Activated CD8-positive, alpha-beta memory T cell treated with anti-CD3 and anti-CD28 coated beads, Interleukin-2, amount 10 ng/mL, durations not matched to agents 7 days and 5 days (primary cell): ENCODE measurements at regions of chr4 and their contacts with region 1.

Region 1: GRCh38 chr4:140252742-140253555 is 99.0 kb upstream of the MAML3 start:
- DNase-seq: peak; percentile 57
- ATAC-seq: peak; percentile 84
- H3K4me3 Mint-ChIP-seq: peak overlapping the region; percentile 54
- H3K27ac Mint-ChIP-seq: no peak overlapping the region
- H3K4me1 Mint-ChIP-seq: peaks cover 23% of the 10 kb centered on the region
- H3K27me3 Mint-ChIP-seq: peaks cover 25% of the 10 kb centered on the region

Region 2: GRCh38 chr4:140012688-140013486 is 240.1 kb before region 1 on chr4:
- CTCF ChIA-PET with region 1: interaction called, 33 read pairs
- DNase-seq: peak; percentile 61
- ATAC-seq: peak; percentile 91
- H3K4me3 Mint-ChIP-seq: no peak overlapping the region
- H3K27ac Mint-ChIP-seq: no peak overlapping the region
- H3K4me1 Mint-ChIP-seq: peaks cover 8% of the 10 kb centered on the region
- H3K27me3 Mint-ChIP-seq: peaks cover 28% of the 10 kb centered on the region

Region 3: DNA sequence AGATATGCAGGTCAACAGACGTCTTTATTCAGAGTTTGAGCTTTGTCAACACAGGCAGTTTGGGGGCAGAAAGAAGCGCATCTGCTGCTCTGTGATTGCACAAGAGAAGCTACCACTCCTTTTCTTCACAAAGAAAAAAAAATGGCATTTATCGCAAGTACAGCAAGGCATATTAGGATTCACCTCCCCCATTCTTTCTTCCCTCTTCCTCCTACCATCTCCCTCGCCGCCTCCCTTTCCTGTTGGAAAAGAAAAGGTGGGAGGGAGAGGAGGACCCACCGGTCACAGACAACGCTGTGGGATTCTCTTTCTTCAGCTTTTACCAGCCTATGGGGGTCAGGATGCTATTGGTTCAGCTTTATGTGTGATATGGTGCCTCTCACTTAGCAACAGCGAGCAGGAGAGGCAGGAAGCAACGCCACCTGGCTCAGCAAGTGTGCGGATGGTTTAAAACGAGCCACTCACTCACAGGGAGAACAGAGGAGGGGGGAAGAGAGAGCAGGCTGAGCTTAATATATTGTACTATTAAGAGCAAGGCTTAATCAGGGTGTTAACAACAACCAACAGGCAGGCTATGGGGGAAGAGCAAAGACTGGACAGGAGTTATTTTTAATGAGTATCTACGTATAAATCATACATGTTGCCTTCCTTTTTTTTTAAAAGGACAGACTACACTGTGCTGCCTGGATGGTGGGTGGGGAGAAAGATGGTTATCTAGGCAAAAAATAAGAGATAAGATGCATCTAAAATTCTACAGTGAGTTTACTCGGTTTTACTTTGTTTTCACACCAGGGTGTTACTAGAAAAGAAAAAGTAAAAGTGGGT is 203.7 kb before region 1 on chr4:
- CTCF ChIA-PET with region 1: interaction called, 40 read pairs
- DNase-seq: peak; percentile 70
- ATAC-seq: peak; percentile 92
- H3K4me3 Mint-ChIP-seq: peak overlapping the region; percentile 71
- H3K27ac Mint-ChIP-seq: peak overlapping the region; percentile 76
- H3K4me1 Mint-ChIP-seq: peaks cover 42% of the 10 kb centered on the region
- H3K27me3 Mint-ChIP-seq: peaks cover 50% of the 10 kb centered on the region

Region 4: DNA sequence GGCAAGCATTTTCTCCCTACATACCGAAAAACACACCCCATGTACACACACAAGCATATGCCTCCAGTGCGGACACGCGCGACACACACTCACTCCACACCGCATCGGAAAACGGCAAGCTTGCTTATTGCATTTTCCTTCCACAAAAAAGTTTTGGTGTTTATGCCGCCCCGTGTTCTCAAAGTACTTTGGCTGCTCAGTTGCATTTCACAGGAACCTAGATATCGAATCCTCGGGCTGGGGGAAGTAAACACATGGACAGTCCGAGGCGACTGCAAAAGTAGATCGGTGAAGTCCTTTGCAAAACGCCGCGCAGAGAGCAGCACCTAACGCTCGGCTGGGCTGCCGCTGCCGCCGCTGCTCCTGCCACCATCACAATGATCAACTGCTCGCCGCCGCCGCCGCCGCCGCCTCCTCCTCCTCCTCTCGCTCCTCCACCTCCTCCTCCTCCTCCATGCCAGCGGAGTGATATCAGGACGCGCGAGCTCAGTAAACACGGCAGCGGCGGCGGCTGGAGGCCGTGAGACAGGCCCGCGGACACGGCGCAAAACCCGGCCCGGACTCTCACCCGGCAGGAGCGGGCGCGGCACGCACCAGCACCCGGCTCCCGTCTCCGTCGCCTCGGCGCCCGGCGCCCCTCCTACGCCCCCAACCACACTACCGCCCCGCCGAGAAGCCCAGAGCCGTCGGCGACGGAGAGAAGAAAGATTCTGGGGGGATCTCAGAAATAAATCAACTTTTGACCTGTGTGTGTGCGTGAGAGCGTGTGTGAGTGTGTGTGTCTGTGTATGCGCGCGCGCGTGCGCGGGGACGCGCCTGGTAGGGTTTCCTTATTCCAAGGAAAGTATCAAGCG is 99.0 kb before region 1 on chr4 and contains the start of gene MAML3:
- CTCF ChIA-PET with region 1: interaction called, 17 read pairs
- DNase-seq: peak; percentile 90
- ATAC-seq: peak; percentile 53
- H3K4me3 Mint-ChIP-seq: peak within 1 kb of the TSS; percentile 88
- H3K27ac Mint-ChIP-seq: peak within 1 kb of the TSS; percentile 80
- H3K4me1 Mint-ChIP-seq: peaks cover 42% of the 10 kb centered on the region
- H3K27me3 Mint-ChIP-seq: peaks cover 47% of the 10 kb centered on the region
- total RNA-seq, gene MAML3: 1.8 to 4.3 TPM

Region 5: DNA sequence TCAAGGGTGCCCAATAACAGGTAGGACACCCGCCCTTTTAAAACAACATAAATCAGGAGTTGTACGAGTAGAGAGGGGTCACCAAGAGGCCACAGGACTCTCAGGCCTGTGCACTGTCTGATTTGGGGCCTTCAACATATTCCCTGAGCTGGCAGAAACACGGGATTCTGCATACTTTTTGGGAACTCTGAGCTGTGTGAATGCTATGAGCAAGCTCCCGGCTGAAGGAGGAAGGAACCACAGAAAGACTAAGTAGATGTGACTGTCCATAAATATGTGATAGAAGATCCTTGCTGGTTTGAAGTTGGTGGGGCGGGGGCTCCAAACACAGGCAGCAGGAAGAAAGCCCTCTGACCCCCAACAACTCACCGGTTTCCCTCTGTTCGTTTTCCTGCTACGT is 16.2 kb before region 1 on chr4:
- CTCF ChIA-PET with region 1: interaction called, 15 read pairs
- DNase-seq: no peak
- ATAC-seq: no peak
- H3K4me3 Mint-ChIP-seq: no peak overlapping the region
- H3K27ac Mint-ChIP-seq: no peak overlapping the region
- H3K4me1 Mint-ChIP-seq: peaks cover 20% of the 10 kb centered on the region
- H3K27me3 Mint-ChIP-seq: peaks cover 10% of the 10 kb centered on the region